Right lobe of liver (tissue), 6 donors: ENCODE measurements at regions of chrX and their contacts with region 1.

Region 1: GRCh38 chrX:109714340-109714958 is 18.6 kb downstream of the ACSL4 start:
- DNase-seq: no peak
- ATAC-seq: no peak
- H3K4me3 ChIP-seq: no peak overlapping the region
- H3K27ac ChIP-seq: no peak overlapping the region
- H3K4me1 ChIP-seq: no peaks in the 10 kb centered on the region
- H3K27me3 ChIP-seq: peaks cover 0 to 10% of the 10 kb centered on the region in 2 donors
- CTCF ChIP-seq: no peak
- POLR2A ChIP-seq: no peak

Region 2: DNA sequence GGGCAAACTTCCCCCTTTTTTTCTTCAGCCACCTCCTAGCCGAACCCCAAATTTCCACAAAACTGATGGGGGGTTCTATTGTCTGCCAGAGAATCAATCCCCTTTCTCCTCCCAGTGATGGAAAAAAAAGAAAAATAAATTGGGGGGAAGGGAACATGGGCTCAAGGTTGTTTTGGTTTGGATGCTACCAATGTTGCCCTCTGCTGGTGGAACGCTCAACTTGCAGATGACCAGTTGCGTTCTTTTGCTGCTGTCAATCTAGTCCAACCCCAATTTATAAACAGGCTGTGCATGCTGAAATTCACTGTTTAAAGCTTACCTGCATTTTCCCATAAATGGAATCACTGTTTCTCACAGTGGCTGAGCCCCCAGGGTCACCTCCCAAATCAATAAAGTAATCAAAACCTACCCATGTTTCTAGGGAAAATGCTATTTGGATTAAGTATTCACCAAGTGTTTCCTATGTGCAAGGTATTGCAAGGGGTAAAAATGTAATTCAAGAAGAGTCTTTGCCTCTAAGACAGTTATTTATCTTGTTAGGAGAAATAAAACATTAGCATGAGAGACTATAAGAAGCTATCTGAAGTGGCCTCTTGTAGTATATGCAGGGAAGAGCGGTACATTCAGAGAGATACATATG is 171.8 kb after region 1 on chrX:
- intact Hi-C with region 1: loop called (anchors 5 to 10 kb)
- DNase-seq: no peak
- ATAC-seq: peak; percentile 66 to 74 (median 72)
- H3K4me3 ChIP-seq: no peak overlapping the region
- H3K27ac ChIP-seq: no peak overlapping the region
- H3K4me1 ChIP-seq: no peaks in the 10 kb centered on the region
- H3K27me3 ChIP-seq: peaks cover 0 to 18% of the 10 kb centered on the region in 2 donors
- CTCF ChIP-seq: peak; percentile 68 to 84 (median 76)
- POLR2A ChIP-seq: no peak